SK-N-SH (cell line): ENCODE measurements at regions of chr6 and their contacts with region 1.

Region 1: DNA sequence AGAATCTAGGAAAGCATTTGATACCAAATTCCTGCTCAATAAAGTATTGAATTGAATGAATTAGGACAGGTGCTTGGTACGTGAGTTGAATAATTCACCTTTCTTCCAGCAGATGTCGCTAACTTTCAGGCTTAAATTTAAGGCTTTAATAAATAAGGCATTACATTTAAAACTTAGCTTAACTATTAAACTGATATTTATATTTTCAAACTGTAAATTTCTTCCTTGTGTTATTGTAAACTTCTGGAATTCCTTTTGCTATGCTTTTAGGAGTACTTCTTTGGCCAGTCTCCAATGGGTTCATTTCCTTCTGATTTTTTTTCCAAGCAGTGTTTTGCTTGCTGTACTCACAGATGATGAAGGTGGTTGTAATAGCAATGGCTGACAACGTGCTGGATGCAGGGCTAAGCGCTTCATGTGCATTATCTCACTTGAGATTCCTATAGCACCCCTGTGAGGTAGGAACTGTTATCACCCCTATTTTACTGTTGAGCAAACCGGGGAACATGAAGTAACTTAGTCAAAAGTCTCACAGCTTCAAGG is 71.3 kb upstream of the SLC2A12 start:
- DNase-seq: peak; percentile 53
- H3K4me3 ChIP-seq: no peak overlapping the region; a peak in 1 of 4 replicates
- H3K27ac ChIP-seq: no peak overlapping the region
- H3K4me1 ChIP-seq: no peaks in the 10 kb centered on the region
- H3K27me3 ChIP-seq: no peaks in the 10 kb centered on the region
- CTCF ChIP-seq: peak; percentile 86
- EP300 ChIP-seq: no peak
- RAD21 ChIP-seq: peak; percentile 58

Region 2: DNA sequence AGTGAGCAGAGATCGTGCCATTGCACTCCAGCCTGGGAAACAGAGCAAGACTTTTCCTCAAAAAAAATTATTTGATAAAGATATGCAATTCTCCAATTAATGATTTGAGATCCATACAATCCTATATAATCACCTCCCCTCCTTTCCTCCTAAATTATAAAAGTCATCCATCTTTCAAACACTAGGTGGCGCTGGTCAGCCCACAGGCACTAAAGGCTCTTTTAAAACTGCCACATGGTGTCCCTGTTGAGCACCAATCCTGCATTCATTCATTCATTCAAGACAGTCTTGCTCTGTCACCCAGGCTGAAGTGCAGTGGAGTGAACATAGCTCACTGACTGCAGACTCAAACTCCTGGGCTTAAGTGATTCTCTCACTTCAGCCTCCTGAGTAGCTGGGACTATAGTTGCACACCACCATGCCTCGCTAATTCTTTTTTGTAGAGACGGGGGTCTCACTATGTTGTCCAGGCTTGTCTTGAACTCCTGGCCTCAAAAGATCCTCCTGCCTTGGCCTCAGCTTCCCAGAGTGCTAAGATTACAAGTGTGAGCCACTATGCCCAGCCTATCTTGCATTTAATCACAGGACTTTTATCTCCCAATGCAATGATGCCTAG is 12.6 kb before region 1 on chr6:
- CTCF ChIA-PET with region 1: interaction called, 53 read pairs
- POLR2A ChIA-PET with region 1: no interaction called
- DNase-seq: peak; percentile 64
- H3K4me3 ChIP-seq: peak overlapping the region in 1 of 2 experiments; percentile 57; a peak in 1 of 4 replicates
- H3K27ac ChIP-seq: no peak overlapping the region
- H3K4me1 ChIP-seq: no peaks in the 10 kb centered on the region
- H3K27me3 ChIP-seq: no peaks in the 10 kb centered on the region; the same call in 1 of the 2 replicates
- CTCF ChIP-seq: peak; percentile 90
- EP300 ChIP-seq: no peak
- RAD21 ChIP-seq: peak; percentile 42; the same call in 1 of the 2 replicates

Region 3: DNA sequence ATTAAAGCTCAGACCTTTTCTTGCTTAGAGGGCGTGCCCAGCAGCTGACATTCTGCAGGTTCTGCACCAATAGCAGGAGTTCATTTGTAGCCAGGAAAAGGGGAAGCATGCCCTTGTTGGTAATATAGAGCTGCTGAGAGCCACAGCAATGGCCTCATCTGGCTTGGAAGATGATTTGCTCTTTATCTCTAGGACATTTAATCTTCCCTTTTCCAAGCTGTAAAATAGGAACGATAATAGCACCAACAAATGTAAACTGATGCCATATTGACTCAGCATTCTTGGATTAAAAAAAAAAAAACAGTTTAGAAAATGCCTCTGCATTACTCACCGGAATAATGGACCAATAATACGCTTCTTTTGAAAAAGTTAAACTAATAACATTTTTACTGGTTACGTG is 22.0 kb after region 1 on chr6:
- CTCF ChIA-PET with region 1: interaction called, 27 read pairs
- POLR2A ChIA-PET with region 1: no interaction called
- DNase-seq: no peak
- H3K4me3 ChIP-seq: no peak overlapping the region
- H3K27ac ChIP-seq: no peak overlapping the region
- H3K4me1 ChIP-seq: no peaks in the 10 kb centered on the region; a peak in 1 of 4 replicates
- H3K27me3 ChIP-seq: no peaks in the 10 kb centered on the region
- CTCF ChIP-seq: no peak
- EP300 ChIP-seq: no peak
- RAD21 ChIP-seq: no peak

Region 4: DNA sequence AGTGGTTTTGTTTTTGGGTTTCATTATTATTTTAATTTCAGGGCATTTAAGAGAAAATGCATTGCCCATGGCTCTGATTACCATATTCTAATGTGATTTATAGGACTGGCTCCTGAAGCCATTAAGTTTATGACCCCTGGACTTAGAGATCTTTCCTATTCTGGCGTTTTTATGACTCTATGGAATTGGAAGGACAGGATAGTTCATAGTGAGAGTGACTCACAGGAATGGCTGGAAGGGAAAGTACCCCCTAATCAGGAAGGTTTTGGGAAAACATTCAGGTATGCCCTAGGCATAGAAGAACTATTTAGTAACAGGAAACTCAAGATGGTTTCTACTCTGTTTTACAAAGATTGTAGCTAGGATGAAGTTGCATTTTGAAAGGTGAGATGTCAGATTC is 37.3 kb after region 1 on chr6:
- CTCF ChIA-PET with region 1: interaction called, 21 read pairs
- POLR2A ChIA-PET with region 1: no interaction called
- DNase-seq: no peak
- H3K4me3 ChIP-seq: no peak overlapping the region
- H3K27ac ChIP-seq: no peak overlapping the region
- H3K4me1 ChIP-seq: no peaks in the 10 kb centered on the region
- H3K27me3 ChIP-seq: no peaks in the 10 kb centered on the region
- CTCF ChIP-seq: no peak
- EP300 ChIP-seq: no peak
- RAD21 ChIP-seq: no peak

Region 5: GRCh38 chr6:134822920-134823709 is 699.4 kb after region 1 on chr6:
- CTCF ChIA-PET with region 1: interaction called, 17 read pairs
- POLR2A ChIA-PET with region 1: no interaction called
- DNase-seq: peak; percentile 77
- H3K4me3 ChIP-seq: no peak overlapping the region; a peak in 1 of 4 replicates
- H3K27ac ChIP-seq: no peak overlapping the region
- H3K4me1 ChIP-seq: peaks cover 0 to 5% of the 10 kb centered on the region in 2 experiments; a peak in 3 of 4 replicates
- H3K27me3 ChIP-seq: no peaks in the 10 kb centered on the region
- CTCF ChIP-seq: peak; percentile 80
- EP300 ChIP-seq: no peak
- RAD21 ChIP-seq: peak; percentile 99

Region 6: DNA sequence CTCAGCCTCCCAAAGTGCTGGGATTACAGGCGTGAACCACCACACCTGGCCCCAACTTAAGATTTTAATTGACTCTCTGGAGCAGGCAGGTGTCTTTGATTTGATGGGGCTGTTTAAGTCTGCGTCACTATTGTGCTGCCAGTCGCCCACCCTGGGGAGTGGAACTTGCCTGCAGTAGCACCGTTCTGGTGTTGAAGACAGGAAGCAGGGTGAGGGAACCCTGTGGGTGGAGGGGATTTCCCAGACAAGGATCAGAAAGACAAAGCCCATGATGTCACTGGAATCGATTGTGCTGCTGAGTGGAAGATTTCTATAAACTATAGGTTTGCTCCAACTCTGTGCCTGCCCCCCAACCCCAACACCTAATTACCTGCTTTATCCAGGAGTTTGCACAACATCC is 815.2 kb after region 1 on chr6:
- CTCF ChIA-PET with region 1: interaction called, 45 read pairs
- POLR2A ChIA-PET with region 1: no interaction called
- DNase-seq: no peak
- H3K4me3 ChIP-seq: no peak overlapping the region
- H3K27ac ChIP-seq: no peak overlapping the region
- H3K4me1 ChIP-seq: peaks cover 3 to 4% of the 10 kb centered on the region in 2 experiments; a peak in 2 of 4 replicates
- H3K27me3 ChIP-seq: no peaks in the 10 kb centered on the region
- CTCF ChIP-seq: no peak
- EP300 ChIP-seq: no peak
- RAD21 ChIP-seq: no peak